Activated CD4-positive, alpha-beta T cell treated with anti-CD3 and anti-CD28 coated beads, Interleukin-2, amount 10 ng/mL, durations not matched to agents 24 days and 14 days (primary cell): ENCODE measurements at regions of chr1 and their contacts with region 1.

Region 1: DNA sequence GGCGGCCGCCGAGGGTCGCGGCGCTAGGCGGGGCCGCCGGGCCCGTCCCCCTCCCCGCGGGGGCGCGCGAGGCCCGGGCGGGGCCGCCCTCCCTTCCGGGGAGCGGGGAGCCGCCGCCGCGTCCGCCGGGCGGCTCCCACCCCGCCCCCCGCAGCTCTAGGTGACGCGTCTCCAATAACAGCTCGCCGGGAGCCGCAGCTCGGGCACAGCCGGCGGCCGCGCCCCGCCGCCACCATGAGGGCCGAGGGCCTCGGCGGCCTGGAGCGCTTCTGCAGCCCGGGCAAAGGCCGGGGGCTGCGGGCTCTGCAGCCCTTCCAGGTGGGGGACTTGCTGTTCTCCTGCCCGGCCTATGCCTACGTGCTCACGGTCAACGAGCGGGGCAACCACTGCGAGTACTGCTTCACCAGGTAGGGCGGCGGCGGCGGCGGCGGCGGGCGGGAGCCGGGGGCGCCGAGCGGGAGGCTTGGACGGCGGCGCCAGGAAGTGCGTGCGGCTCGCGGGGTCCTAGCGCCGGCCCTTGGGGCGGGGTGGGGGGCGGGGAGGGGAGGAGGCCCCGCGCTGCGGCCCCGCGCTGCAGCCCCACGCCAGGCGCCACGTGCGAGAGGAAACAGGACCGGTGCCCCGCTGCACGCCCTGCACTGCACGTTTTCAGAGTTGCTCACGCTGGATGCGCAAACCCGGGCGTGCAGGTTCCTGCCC is at the start of gene SMYD2:
- DNase-seq: peak; percentile 90
- H3K4me3 Mint-ChIP-seq: peak within 1 kb of the TSS; percentile 93
- H3K27ac Mint-ChIP-seq: peak within 1 kb of the TSS; percentile 90
- H3K4me1 Mint-ChIP-seq: peaks cover 37% of the 10 kb centered on the region
- H3K27me3 Mint-ChIP-seq: no peaks in the 10 kb centered on the region
- total RNA-seq, gene SMYD2: 33.3 and 34.1 TPM in 2 replicates

Region 2: GRCh38 chr1:213231795-213232231 is 1049.4 kb before region 1 on chr1:
- intact Hi-C with region 1: no loop called
- DNase-seq: no peak
- H3K4me3 Mint-ChIP-seq: no peak overlapping the region
- H3K27ac Mint-ChIP-seq: no peak overlapping the region
- H3K4me1 Mint-ChIP-seq: peaks cover 4% of the 10 kb centered on the region
- H3K27me3 Mint-ChIP-seq: no peaks in the 10 kb centered on the region

Region 3: DNA sequence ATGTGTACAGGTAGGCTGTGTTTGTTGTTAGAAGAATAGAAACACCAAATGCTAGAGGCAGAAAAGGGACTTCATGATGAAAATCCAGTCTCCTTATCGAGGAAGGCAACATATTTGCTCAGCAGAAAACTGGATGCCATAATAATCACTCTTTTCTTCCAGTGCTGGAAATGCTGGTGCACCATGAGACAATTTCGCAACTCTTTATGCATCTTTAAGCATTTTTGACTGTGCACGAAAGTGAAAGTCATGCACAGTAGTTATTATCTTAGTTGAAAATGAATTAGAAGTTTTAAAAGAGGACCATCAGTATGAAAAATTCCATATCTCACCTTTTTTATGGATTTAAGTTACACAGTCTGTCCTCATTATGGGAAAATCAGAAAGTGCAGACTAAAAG is 28.8 kb after region 1 on chr1:
- intact Hi-C with region 1: loop called (anchors 2 kb)
- DNase-seq: no peak
- H3K4me3 Mint-ChIP-seq: peak overlapping the region; percentile 42
- H3K27ac Mint-ChIP-seq: no peak overlapping the region
- H3K4me1 Mint-ChIP-seq: peaks cover 16% of the 10 kb centered on the region
- H3K27me3 Mint-ChIP-seq: no peaks in the 10 kb centered on the region

Region 4: GRCh38 chr1:214602764-214603657 is 321.8 kb after region 1 on chr1 and contains the start of gene CENPF:
- intact Hi-C with region 1: loop called (anchors 2 kb)
- DNase-seq: peak; percentile 98
- H3K4me3 Mint-ChIP-seq: peak within 1 kb of the TSS; percentile 90
- H3K27ac Mint-ChIP-seq: peak within 1 kb of the TSS; percentile 97
- H3K4me1 Mint-ChIP-seq: peaks cover 29% of the 10 kb centered on the region
- H3K27me3 Mint-ChIP-seq: no peaks in the 10 kb centered on the region
- total RNA-seq, gene CENPF: 54.4 and 63.0 TPM in 2 replicates